PC-3 (cell line): ENCODE measurements at regions of chr1 and their contacts with region 1.

Region 1: DNA sequence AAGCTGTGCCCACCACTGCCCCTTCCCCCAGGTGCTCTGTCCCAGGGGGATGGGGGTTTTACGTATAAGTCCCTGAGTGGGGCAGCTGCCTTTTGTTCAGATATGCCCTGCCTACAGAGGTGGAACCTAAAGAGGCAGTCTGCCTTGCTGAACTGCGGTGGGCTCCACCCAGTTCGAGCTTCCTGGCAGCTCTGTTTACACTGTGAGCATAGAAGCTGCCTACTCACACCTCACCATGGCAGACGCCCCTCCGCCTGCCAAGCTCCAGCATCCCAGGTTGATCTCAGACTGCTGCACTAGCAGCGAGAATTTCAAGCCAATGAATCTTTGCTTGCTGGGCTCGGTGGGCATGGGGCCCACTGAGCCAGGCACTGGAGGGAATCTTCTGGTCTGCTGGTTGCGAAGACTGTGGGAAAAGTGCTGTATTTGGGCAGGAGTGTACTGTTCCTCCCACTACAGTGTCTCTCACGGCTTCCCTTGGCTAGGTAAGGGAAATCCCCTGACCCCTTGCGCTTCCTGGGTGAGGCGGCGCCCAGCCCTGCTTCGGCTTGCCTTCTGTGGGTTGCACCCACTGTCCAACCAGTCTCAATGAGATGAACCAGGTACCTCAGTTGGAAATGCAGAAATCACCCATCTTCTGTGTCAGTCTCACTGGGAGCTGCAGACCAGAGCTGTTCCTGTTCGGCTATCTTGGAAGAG is 17.6 kb upstream of the RWDD3 start:
- DNase-seq: no peak
- ATAC-seq: no peak
- H3K4me3 ChIP-seq: no peak overlapping the region
- H3K27ac ChIP-seq: no peak overlapping the region
- H3K4me1 ChIP-seq: no peaks in the 10 kb centered on the region
- H3K27me3 ChIP-seq: no peaks in the 10 kb centered on the region
- CTCF ChIP-seq: no peak

Region 2: DNA sequence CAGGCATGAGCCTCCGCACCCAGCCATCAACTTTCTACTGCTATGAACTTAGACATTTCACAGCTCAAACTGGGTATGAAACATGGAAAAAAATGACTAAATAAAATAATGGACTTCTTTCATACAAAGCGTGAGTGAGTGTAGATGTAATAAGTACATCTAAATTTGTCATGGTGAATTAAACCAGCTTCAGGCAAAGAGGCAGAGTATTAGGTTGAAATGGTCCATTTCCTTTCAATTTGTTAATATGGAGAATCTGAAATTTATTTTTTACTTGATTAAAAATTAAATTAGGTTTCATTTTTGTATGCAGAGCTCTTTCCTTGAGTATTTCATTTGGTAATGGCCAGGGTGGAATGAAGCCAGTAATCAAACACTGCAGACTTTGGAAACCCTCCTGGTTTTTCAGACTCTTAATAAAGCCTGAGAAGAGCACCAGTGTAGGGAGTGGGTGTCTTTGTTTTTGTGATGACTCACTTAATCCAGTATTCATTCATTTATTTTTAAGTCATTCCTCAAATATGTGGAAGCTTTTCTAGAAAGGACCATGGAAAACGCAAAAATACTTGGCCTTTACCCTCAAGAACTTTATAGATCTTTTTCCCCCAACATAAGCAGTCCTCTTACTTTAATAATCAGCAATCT is 192.9 kb before region 1 on chr1:
- CTCF ChIA-PET with region 1: no interaction called
- POLR2A ChIA-PET with region 1: no interaction called
- intact Hi-C with region 1: no loop called
- DNase-seq: peak; percentile 79
- ATAC-seq: peak; percentile 93
- H3K4me3 ChIP-seq: peak overlapping the region; percentile 15; the same call in 1 of the 2 replicates
- H3K27ac ChIP-seq: peak overlapping the region; percentile 63
- H3K4me1 ChIP-seq: peaks cover 39% of the 10 kb centered on the region
- H3K27me3 ChIP-seq: no peaks in the 10 kb centered on the region
- CTCF ChIP-seq: no peak

Region 3: DNA sequence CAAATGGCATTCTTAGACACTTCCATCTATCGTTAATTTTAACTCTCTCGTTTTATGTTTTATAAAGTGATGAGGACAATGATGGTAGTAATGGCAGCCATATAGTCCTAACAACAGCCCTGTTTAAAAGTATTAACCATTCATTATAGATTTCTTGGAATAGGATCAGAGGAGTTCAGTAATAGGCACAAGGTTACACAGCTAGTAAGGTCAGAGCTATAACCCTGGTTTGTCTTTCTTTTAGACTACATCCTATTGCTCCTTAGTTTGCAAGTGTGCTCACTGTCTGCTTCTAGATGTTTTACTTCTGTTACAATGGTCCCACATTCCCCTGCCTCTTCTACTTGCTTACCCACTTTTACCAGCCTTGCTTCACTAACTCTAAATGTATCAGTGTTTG is 48.4 kb before region 1 on chr1:
- CTCF ChIA-PET with region 1: no interaction called
- POLR2A ChIA-PET with region 1: no interaction called
- intact Hi-C with region 1: loop called (anchors 2 kb)
- DNase-seq: no peak
- ATAC-seq: no peak
- H3K4me3 ChIP-seq: no peak overlapping the region
- H3K27ac ChIP-seq: peak overlapping the region; percentile 1; the same call in 1 of the 2 replicates
- H3K4me1 ChIP-seq: peaks cover 28% of the 10 kb centered on the region
- H3K27me3 ChIP-seq: no peaks in the 10 kb centered on the region
- CTCF ChIP-seq: no peak